Mammary epithelial cell (primary cell): ENCODE measurements at regions of chr1 and their contacts with region 1.

Region 1: GRCh38 chr1:175749075-175749474 is 5.7 kb upstream of the TNR start:
- DNase-seq: no peak
- H3K4me3 ChIP-seq: no peak overlapping the region
- H3K27ac ChIP-seq: no peak overlapping the region
- H3K4me1 ChIP-seq: no peaks in the 10 kb centered on the region
- H3K27me3 ChIP-seq: peaks cover 3% of the 10 kb centered on the region
- CTCF ChIP-seq: no peak

Region 2: GRCh38 chr1:175830500-175830899 is 81.4 kb after region 1 on chr1:
- CTCF ChIA-PET with region 1: no interaction called
- dilution Hi-C with region 1: no loop called
- in situ Hi-C with region 1: no loop called
- intact Hi-C with region 1: no loop called
- DNase-seq: peak; percentile 25
- H3K4me3 ChIP-seq: no peak overlapping the region
- H3K27ac ChIP-seq: no peak overlapping the region
- H3K4me1 ChIP-seq: no peaks in the 10 kb centered on the region
- H3K27me3 ChIP-seq: no peaks in the 10 kb centered on the region
- CTCF ChIP-seq: no peak

Region 3: GRCh38 chr1:175848329-175848728 is 99.3 kb after region 1 on chr1:
- CTCF ChIA-PET with region 1: interaction called, 10 read pairs
- dilution Hi-C with region 1: no loop called
- in situ Hi-C with region 1: no loop called
- intact Hi-C with region 1: no loop called
- DNase-seq: no peak
- H3K4me3 ChIP-seq: no peak overlapping the region
- H3K27ac ChIP-seq: no peak overlapping the region
- H3K4me1 ChIP-seq: no peaks in the 10 kb centered on the region
- H3K27me3 ChIP-seq: peaks cover 2% of the 10 kb centered on the region
- CTCF ChIP-seq: no peak